ENCODE measurements at regions of chr15 and their contacts with region 1.

Region 1: GRCh38 chr15:55290528-55291057 is 980 bp upstream of the RAB27A start:
- DNase-seq: peak; percentile 70
- H3K4me3 ChIP-seq: peak overlapping the region; percentile 76 to 84 (median 82)
- H3K27ac ChIP-seq: peak overlapping the region; percentile 83
- H3K4me1 ChIP-seq: peaks cover 5% of the 10 kb centered on the region
- H3K27me3 ChIP-seq: no peaks in the 10 kb centered on the region
- CTCF ChIP-seq: peak; percentile 86 to 92

Region 2: DNA sequence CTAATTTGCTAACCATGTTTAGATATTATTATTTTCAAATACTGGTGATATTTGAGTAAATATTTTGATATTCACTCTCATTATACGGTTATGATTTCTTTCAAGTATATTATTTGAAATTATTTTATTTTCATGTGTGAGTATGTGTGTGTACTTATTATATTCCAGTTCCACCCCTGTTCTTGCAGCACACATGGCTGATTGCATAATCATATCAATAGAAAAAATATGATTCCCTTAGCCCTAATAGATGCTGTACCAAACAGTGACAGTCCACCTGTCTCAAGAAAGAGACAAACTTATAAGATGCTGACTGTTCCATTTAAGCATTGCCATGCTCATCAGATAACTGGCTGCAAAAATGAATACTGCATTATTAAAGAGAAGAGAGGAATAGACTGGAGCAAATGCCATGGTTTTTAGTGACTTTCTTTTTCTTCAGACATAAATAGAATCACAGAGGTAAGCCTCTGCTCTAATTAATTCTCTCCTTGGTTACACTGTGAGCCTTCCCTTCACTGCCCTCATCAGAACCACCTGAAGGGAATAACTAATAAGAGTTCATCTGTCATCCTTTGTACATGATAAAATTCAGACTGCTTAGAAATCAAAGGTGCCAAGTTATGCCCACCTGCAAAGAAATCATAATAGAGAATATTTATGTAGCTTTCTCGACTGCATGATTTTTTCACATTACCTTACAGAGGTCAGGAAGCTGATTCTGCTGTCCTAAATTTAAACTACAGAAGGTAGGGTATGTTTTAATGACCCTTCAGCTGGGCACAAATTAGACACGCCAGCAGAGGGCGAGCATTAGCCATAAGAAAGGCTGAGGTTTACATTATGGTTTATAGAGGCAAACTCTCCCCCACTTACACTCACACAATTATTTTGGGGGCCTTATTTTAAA is 1328.0 kb before region 1 on chr15:
- CTCF ChIA-PET with region 1: no interaction called
- dilution Hi-C with region 1: no loop called
- in situ Hi-C with region 1: no loop called
- intact Hi-C with region 1: loop called (anchors 1 kb)
- DNase-seq: no peak
- H3K4me3 ChIP-seq: no peak overlapping the region
- H3K27ac ChIP-seq: no peak overlapping the region
- H3K4me1 ChIP-seq: no peaks in the 10 kb centered on the region
- H3K27me3 ChIP-seq: peaks cover 4% of the 10 kb centered on the region
- CTCF ChIP-seq: peak; percentile 74

Region 3: DNA sequence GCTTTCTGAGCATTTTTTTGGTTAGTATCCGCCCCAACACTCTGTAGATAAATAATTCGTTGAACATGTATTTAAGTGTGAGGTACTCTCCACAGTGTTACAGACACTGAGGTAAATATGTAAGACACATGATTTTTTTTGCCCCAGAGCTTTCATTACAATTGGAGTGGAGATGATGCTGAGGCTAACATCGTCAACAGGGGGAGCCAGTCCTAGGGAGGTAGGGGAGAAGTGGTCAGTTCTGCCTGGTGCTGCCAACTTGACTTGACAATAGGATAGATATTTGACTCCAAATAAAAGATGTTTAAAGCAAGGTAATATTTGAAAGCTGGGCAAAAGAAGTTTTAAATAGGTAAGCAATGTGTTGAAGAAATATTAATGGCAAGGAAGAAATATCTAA is 1016.7 kb before region 1 on chr15:
- CTCF ChIA-PET with region 1: no interaction called
- dilution Hi-C with region 1: no loop called
- in situ Hi-C with region 1: no loop called
- intact Hi-C with region 1: loop called (anchors 5 kb)
- DNase-seq: no peak
- H3K4me3 ChIP-seq: no peak overlapping the region
- H3K27ac ChIP-seq: no peak overlapping the region
- H3K4me1 ChIP-seq: no peaks in the 10 kb centered on the region
- H3K27me3 ChIP-seq: no peaks in the 10 kb centered on the region
- CTCF ChIP-seq: peak in 1 of 2 donors; percentile 9

Region 4: GRCh38 chr15:55221090-55222011 is 69.2 kb before region 1 on chr15:
- CTCF ChIA-PET with region 1: interaction called, 9 read pairs
- dilution Hi-C with region 1: no loop called
- in situ Hi-C with region 1: loop called (anchors 5 kb)
- intact Hi-C with region 1: loop called (anchors 1 kb)
- DNase-seq: peak; percentile 84
- H3K4me3 ChIP-seq: no peak overlapping the region
- H3K27ac ChIP-seq: peak overlapping the region; percentile 54
- H3K4me1 ChIP-seq: peaks cover 16% of the 10 kb centered on the region
- H3K27me3 ChIP-seq: no peaks in the 10 kb centered on the region
- CTCF ChIP-seq: no peak

Region 5: GRCh38 chr15:55434989-55435825 is 144.6 kb after region 1 on chr15:
- CTCF ChIA-PET with region 1: no interaction called
- dilution Hi-C with region 1: no loop called
- in situ Hi-C with region 1: loop called in 1 of 2 experiments (anchors 10 kb)
- intact Hi-C with region 1: loop called (anchors 1 kb)
- DNase-seq: peak; percentile 40
- H3K4me3 ChIP-seq: no peak overlapping the region
- H3K27ac ChIP-seq: no peak overlapping the region
- H3K4me1 ChIP-seq: no peaks in the 10 kb centered on the region
- H3K27me3 ChIP-seq: no peaks in the 10 kb centered on the region
- CTCF ChIP-seq: peak; percentile 45 to 64